Testis (tissue), 5 donors: ENCODE measurements at regions of chr5 and their contacts with region 1.

Region 1: GRCh38 chr5:58498340-58498942 is 7.2 kb downstream of the GAPT start:
- DNase-seq: peak; percentile 73
- H3K4me3 ChIP-seq: no peak overlapping the region
- H3K27ac ChIP-seq: no peak overlapping the region
- H3K4me1 ChIP-seq: no peaks in the 10 kb centered on the region
- H3K27me3 ChIP-seq: no peaks in the 10 kb centered on the region
- CTCF ChIP-seq: peak; percentile 73 to 82 (median 78)
- POLR2A ChIP-seq: no peak

Region 2: GRCh38 chr5:58842852-58843251 is 344.4 kb after region 1 on chr5:
- intact Hi-C with region 1: loop called (anchors 5 kb)
- DNase-seq: no peak
- H3K4me3 ChIP-seq: no peak overlapping the region
- H3K27ac ChIP-seq: no peak overlapping the region
- H3K4me1 ChIP-seq: no peaks in the 10 kb centered on the region
- H3K27me3 ChIP-seq: no peaks in the 10 kb centered on the region
- CTCF ChIP-seq: no peak
- POLR2A ChIP-seq: no peak